ENCODE measurements at regions of chr19 and their contacts with region 1.

Region 1: DNA sequence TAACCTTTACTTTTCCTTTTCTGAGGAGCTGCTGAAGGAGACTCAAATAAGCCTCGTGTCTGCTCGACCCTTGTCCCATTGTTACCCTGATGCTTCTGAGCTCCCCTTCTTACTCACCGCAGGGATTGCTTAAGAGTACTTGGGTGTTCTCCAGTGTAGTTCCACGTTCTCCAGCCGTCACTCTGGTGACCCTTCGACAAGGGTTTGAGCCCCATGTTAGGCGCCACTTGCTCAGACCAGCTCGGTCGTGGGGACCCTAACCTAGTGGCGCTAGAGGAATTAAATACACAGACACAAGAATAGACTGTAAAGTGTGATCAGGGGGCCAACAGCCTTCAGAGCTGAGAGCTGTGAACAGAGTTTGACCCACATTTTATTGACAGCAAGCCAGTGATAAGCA is 10.3 kb downstream of the ZNF480 start:
- DNase-seq: no peak
- H3K4me3 ChIP-seq: no peak overlapping the region
- H3K27ac ChIP-seq: no peak overlapping the region
- H3K4me1 ChIP-seq: no peaks in the 10 kb centered on the region
- H3K27me3 ChIP-seq: no peaks in the 10 kb centered on the region
- CTCF ChIP-seq: no peak

Region 2: DNA sequence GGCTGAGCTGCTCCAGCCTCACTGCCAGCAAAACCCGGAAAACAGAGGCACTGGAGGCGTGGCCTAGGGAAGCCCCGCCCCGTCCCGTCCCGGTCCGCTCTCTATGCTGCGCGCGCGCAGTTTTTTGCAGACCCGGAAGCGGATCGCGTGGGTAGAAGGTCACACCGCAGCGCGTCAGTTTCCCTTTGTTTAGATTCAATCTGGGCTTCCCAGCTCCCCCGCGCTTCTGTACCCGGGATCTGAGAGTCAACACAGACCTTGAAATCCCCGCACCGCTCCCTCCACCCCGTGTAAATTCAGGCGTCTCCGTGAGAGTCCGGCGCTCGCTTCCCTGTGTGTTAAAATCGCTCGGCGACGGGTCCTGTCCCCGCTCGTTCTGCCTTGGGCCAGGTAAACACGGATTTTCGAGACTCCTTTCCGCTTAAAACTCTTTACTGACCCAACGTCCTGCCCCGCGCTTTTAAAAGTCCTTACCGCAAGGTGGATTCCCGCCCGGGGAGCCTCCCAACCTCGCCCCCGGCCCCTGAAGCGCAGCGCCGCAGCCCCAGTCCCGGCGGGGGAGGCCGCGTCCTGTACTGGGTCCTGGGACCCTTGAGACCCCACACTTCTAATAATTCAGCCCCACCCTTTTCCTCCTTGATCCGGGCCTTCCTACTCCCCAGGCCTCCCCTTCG is 29.0 kb after region 1 on chr19 and contains the start of gene ZNF610:
- CTCF ChIA-PET with region 1: no interaction called
- POLR2A ChIA-PET with region 1: no interaction called
- intact Hi-C with region 1: no loop called
- DNase-seq: peak; percentile 40 to 88
- H3K4me3 ChIP-seq: peak within 1 kb of the TSS; percentile 63
- H3K27ac ChIP-seq: no peak within 1 kb of the TSS
- H3K4me1 ChIP-seq: no peaks in the 10 kb centered on the region
- H3K27me3 ChIP-seq: no peaks in the 10 kb centered on the region
- CTCF ChIP-seq: no peak
- total RNA-seq, gene ZNF610: 1.8 and 2.6 TPM in 2 replicates

Region 3: GRCh38 chr19:52590728-52591127 is 283.5 kb after region 1 on chr19:
- CTCF ChIA-PET with region 1: interaction called, 14 read pairs
- POLR2A ChIA-PET with region 1: no interaction called
- intact Hi-C with region 1: no loop called
- DNase-seq: no peak
- H3K4me3 ChIP-seq: no peak overlapping the region
- H3K27ac ChIP-seq: no peak overlapping the region
- H3K4me1 ChIP-seq: no peaks in the 10 kb centered on the region
- H3K27me3 ChIP-seq: no peaks in the 10 kb centered on the region
- CTCF ChIP-seq: no peak